ENCODE measurements at regions of chr20 and their contacts with region 1.

Region 1: GRCh38 chr20:21702553-21703470 is 2.7 kb upstream of the PAX1 start:
- DNase-seq: peak; percentile 88
- H3K4me3 ChIP-seq: peak overlapping the region; percentile 36
- H3K27ac ChIP-seq: no peak overlapping the region
- H3K4me1 ChIP-seq: peaks cover 3% of the 10 kb centered on the region
- H3K27me3 ChIP-seq: peaks cover 88% of the 10 kb centered on the region
- CTCF ChIP-seq: peak; percentile 90

Region 2: DNA sequence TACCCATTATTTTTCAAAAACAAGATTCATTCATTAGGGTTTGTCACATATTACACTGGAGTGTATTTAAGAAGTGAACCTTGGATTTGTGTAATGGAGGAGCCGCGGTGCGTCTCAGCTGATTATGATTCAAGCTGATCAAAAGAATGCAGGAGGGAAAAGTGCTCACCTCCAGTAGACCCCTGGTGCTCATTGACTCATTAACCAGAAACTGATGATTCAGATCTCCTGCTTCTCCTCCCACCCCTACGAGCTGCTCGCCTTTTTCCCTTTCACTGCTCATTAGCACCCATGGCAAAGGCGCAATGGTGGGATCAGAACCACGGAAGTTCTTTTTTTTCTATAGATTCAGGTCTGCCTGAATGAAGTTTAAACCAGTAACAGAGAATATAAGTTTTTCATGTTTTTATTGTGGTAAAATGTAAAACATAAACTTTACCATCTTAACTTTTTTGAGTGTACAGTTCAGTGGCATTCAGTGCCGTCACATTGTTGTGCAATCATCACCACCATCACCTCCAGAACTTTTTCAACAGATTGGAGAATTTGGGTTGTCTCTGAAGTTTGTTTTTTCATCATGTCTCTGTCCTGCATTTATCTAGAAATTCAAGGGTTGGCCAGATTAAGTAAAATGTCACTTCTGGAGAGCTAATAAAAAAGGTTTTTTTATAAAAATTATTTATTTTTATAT is 698.3 kb before region 1 on chr20:
- CTCF ChIA-PET with region 1: interaction called, 10 read pairs
- POLR2A ChIA-PET with region 1: no interaction called
- intact Hi-C with region 1: no loop called
- DNase-seq: no peak
- H3K4me3 ChIP-seq: no peak overlapping the region
- H3K27ac ChIP-seq: no peak overlapping the region
- H3K4me1 ChIP-seq: no peaks in the 10 kb centered on the region
- H3K27me3 ChIP-seq: peaks cover 15% of the 10 kb centered on the region
- CTCF ChIP-seq: no peak

Region 3: GRCh38 chr20:22106308-22106938 is 403.6 kb after region 1 on chr20:
- CTCF ChIA-PET with region 1: interaction called, 6 read pairs
- POLR2A ChIA-PET with region 1: no interaction called
- intact Hi-C with region 1: loop called (anchors 1 kb)
- DNase-seq: peak; percentile 37
- H3K4me3 ChIP-seq: no peak overlapping the region
- H3K27ac ChIP-seq: no peak overlapping the region
- H3K4me1 ChIP-seq: no peaks in the 10 kb centered on the region
- H3K27me3 ChIP-seq: no peaks in the 10 kb centered on the region
- CTCF ChIP-seq: peak; percentile 60

Region 4: GRCh38 chr20:22312744-22313346 is 610.0 kb after region 1 on chr20:
- CTCF ChIA-PET with region 1: no interaction called
- POLR2A ChIA-PET with region 1: no interaction called
- intact Hi-C with region 1: loop called (anchors 5 kb)
- DNase-seq: peak; percentile 44
- H3K4me3 ChIP-seq: no peak overlapping the region
- H3K27ac ChIP-seq: no peak overlapping the region
- H3K4me1 ChIP-seq: no peaks in the 10 kb centered on the region
- H3K27me3 ChIP-seq: peaks cover 3% of the 10 kb centered on the region
- CTCF ChIP-seq: peak; percentile 78